ENCODE measurements at regions of chr2 and their contacts with region 1.

Region 1: GRCh38 chr2:143635327-143635726 is 506.1 kb downstream of the ARHGAP15 start:
- DNase-seq: no peak
- ATAC-seq: no peak
- H3K4me3 ChIP-seq: no peak overlapping the region
- H3K27ac ChIP-seq: no peak overlapping the region
- H3K4me1 ChIP-seq: no peaks in the 10 kb centered on the region
- H3K27me3 ChIP-seq: no peaks in the 10 kb centered on the region
- CTCF ChIP-seq: no peak
- EP300 ChIP-seq: no peak
- POLR2A ChIP-seq: no peak
- RAD21 ChIP-seq: no peak

Region 2: GRCh38 chr2:142803158-142803557 is 832.2 kb before region 1 on chr2:
- CTCF ChIA-PET with region 1: no interaction called
- POLR2A ChIA-PET with region 1: no interaction called
- in situ Hi-C with region 1: no loop called
- intact Hi-C with region 1: loop called (anchors 5 kb)
- DNase-seq: no peak
- ATAC-seq: no peak
- H3K4me3 ChIP-seq: no peak overlapping the region
- H3K27ac ChIP-seq: no peak overlapping the region
- H3K4me1 ChIP-seq: no peaks in the 10 kb centered on the region
- H3K27me3 ChIP-seq: no peaks in the 10 kb centered on the region
- CTCF ChIP-seq: no peak
- EP300 ChIP-seq: no peak
- POLR2A ChIP-seq: no peak
- RAD21 ChIP-seq: no peak

Region 3: DNA sequence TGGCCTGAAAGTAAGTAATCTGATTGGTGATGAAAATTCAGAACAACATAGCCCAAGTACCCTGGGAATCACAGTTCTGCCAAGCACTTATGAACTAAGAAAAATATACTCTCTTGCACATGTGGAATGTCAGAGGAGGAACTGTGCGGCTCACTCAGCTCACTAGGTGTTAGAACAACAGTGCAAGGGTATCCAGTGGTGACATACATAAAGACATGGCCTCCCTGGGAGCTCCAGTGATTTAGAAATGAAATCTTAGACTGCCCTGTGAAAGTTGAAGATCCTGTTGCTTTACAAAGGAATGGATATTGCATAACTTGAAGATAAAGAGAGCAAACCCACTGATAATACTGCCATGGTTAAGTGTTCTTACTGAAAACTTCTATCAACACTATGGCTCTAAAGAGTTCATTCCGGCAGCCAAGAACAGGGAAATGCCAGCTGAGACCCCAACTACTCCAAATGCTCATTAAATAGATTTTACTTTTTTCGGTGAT is 259.9 kb before region 1 on chr2:
- CTCF ChIA-PET with region 1: no interaction called
- POLR2A ChIA-PET with region 1: no interaction called
- in situ Hi-C with region 1: no loop called
- intact Hi-C with region 1: no loop called
- DNase-seq: no peak
- ATAC-seq: no peak
- H3K4me3 ChIP-seq: no peak overlapping the region
- H3K27ac ChIP-seq: no peak overlapping the region
- H3K4me1 ChIP-seq: no peaks in the 10 kb centered on the region
- H3K27me3 ChIP-seq: no peaks in the 10 kb centered on the region
- CTCF ChIP-seq: no peak
- EP300 ChIP-seq: no peak
- POLR2A ChIP-seq: no peak
- RAD21 ChIP-seq: no peak

Region 4: DNA sequence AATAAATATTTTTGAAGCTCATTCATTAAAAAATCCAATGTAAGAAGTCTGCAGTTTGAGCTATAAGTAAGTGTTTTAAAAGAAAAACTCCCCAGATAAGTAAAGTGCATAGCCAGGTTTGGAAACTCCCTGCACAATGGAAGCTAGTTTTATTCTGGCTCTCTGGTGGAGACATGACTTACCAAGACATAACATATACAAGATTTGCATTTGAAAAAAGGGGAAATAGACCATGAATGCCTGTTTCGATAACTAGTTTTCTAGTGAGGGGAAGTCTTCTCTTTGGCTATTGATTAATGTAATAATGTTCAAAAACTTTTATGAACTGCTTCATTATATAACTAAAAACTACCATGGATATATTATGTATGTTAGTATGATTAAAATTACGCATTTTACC is 70.9 kb before region 1 on chr2:
- CTCF ChIA-PET with region 1: no interaction called
- POLR2A ChIA-PET with region 1: no interaction called
- in situ Hi-C with region 1: no loop called
- intact Hi-C with region 1: no loop called
- DNase-seq: no peak
- ATAC-seq: no peak
- H3K4me3 ChIP-seq: no peak overlapping the region
- H3K27ac ChIP-seq: no peak overlapping the region
- H3K4me1 ChIP-seq: no peaks in the 10 kb centered on the region
- H3K27me3 ChIP-seq: no peaks in the 10 kb centered on the region
- CTCF ChIP-seq: no peak
- EP300 ChIP-seq: no peak
- POLR2A ChIP-seq: no peak
- RAD21 ChIP-seq: no peak

Region 5: DNA sequence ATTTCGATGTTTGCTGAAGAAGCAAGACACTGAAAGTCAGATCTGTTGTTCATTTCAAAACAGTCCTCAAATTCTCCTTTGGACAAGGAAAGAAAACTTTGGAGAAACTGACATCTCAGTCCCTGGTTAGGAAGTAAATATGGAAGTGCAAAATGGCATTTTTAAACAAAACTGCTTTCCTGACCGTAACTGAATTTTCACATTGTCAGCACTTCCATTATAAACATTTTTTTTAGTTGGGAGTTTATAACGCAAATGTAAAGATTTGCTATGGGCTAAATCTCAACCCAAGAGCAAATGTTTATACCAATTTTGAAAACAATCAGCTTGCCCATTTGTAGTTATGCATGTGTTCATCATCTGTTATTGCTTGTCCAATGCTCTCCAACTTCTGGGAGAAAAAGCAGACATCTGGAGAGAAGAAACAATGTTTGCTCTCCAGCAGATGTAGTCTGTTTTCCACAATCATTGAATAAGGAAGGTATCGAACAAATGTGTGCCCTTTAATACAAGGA is 14.0 kb after region 1 on chr2:
- CTCF ChIA-PET with region 1: no interaction called
- POLR2A ChIA-PET with region 1: no interaction called
- in situ Hi-C with region 1: no loop called
- intact Hi-C with region 1: no loop called
- DNase-seq: no peak
- ATAC-seq: no peak
- H3K4me3 ChIP-seq: no peak overlapping the region
- H3K27ac ChIP-seq: no peak overlapping the region
- H3K4me1 ChIP-seq: no peaks in the 10 kb centered on the region
- H3K27me3 ChIP-seq: no peaks in the 10 kb centered on the region; a peak in 1 of 5 replicates
- CTCF ChIP-seq: no peak
- EP300 ChIP-seq: no peak
- POLR2A ChIP-seq: no peak
- RAD21 ChIP-seq: no peak

Measured in HepG2 (cell line).